Activated T-helper 2 cell treated with anti-CD3 and anti-CD28 coated beads, Interferon-gamma antibody, Interleukin-2, Interleukin-4, amounts not matched to agents 10 μg/mL and 5 μg/mL and 100 μg/mL, durations not matched to agents 14 hours and 24 hours and 36 hours (primary cell): ENCODE measurements at regions of chr19 and their contacts with region 1.

Region 1: DNA sequence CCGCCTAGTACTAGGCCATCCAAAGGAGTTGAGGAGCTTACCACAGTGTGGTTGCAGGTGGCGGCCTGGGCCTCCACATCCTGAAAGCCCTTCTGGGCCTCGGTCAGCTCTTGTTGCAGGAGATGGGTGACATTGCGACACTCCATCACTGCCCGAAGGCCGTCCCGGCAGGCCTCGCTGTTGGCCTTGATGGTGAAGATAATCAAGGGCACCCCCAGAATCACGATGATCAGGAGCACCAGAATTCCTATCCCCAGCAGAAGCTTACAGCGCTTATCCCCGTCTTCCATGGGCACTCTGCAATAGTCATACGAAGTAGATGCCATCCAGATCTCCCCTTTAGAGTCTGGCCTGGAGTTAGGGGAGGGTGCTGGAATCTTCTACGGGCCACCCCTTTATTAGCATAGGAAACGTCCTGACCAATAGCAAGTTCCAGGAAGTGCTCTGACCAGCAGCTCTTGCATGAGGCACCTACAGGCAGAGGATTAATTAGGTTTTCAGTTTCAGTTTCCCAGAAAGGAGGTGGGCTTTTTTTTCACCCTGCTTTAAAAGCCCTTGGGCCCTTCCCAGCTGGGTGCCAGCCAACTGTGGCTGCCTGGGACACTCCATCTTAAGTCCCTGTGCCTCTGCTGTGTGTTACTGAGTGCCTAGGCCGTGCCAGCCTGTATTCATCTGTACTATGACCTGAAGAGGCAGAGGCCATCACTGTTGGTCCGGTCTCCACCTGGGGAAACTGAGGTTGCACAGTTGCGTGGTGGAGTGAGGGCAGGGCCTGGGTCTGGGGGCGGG is at the start of gene BST2:
- DNase-seq: peak; percentile 54
- H3K4me3 Mint-ChIP-seq: peak within 1 kb of the TSS; percentile 92
- H3K27ac Mint-ChIP-seq: peak within 1 kb of the TSS; percentile 87
- H3K4me1 Mint-ChIP-seq: peaks cover 31% of the 10 kb centered on the region
- H3K27me3 Mint-ChIP-seq: no peaks in the 10 kb centered on the region
- total RNA-seq, gene BST2: 129 and 133 TPM in 2 replicates

Region 2: DNA sequence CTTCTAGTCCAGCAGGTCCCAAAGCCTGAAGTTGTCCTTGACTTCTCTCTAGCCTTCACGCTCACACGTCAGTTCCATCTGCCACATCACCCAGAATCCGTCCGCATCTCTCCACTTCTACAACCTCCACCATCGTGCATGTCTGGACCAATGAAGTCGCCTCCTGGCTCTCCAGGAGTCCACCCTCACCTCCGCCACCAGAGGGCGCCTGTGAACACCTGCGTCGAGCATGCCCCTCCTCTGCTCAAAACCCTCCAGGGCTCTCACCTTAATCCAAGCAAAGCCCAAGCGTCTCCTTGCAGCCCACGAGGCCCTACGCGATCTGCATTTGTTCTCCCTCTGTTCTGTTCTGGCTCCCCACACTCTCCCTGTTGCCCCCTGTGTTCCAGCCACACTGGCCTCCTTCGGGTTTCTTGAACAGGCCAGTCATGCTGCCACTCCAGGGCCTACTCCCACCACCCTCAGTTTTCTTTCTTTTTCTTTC is 144.6 kb before region 1 on chr19:
- intact Hi-C with region 1: no loop called
- DNase-seq: peak; percentile 83
- H3K4me3 Mint-ChIP-seq: no peak overlapping the region
- H3K27ac Mint-ChIP-seq: no peak overlapping the region
- H3K4me1 Mint-ChIP-seq: peaks cover 8% of the 10 kb centered on the region
- H3K27me3 Mint-ChIP-seq: peaks cover 3% of the 10 kb centered on the region

Region 3: GRCh38 chr19:17305517-17306284 is 99.7 kb before region 1 on chr19 and contains the start of gene MRPL34:
- intact Hi-C with region 1: loop called (anchors 5 kb)
- DNase-seq: peak; percentile 96
- H3K4me3 Mint-ChIP-seq: peak within 1 kb of the TSS; percentile 87
- H3K27ac Mint-ChIP-seq: peak within 1 kb of the TSS; percentile 85
- H3K4me1 Mint-ChIP-seq: peaks cover 36% of the 10 kb centered on the region
- H3K27me3 Mint-ChIP-seq: no peaks in the 10 kb centered on the region
- total RNA-seq, gene MRPL34: 92.0 and 95.7 TPM in 2 replicates

Region 4: GRCh38 chr19:17336872-17337722 is 68.3 kb before region 1 on chr19 and contains the start of gene GTPBP3:
- intact Hi-C with region 1: loop called (anchors 5 kb)
- DNase-seq: peak; percentile 96
- H3K4me3 Mint-ChIP-seq: peak within 1 kb of the TSS; percentile 84
- H3K27ac Mint-ChIP-seq: peak within 1 kb of the TSS; percentile 89
- H3K4me1 Mint-ChIP-seq: peaks cover 15% of the 10 kb centered on the region
- H3K27me3 Mint-ChIP-seq: no peaks in the 10 kb centered on the region
- total RNA-seq, gene GTPBP3: 62.5 and 66.5 TPM in 2 replicates

Region 5: DNA sequence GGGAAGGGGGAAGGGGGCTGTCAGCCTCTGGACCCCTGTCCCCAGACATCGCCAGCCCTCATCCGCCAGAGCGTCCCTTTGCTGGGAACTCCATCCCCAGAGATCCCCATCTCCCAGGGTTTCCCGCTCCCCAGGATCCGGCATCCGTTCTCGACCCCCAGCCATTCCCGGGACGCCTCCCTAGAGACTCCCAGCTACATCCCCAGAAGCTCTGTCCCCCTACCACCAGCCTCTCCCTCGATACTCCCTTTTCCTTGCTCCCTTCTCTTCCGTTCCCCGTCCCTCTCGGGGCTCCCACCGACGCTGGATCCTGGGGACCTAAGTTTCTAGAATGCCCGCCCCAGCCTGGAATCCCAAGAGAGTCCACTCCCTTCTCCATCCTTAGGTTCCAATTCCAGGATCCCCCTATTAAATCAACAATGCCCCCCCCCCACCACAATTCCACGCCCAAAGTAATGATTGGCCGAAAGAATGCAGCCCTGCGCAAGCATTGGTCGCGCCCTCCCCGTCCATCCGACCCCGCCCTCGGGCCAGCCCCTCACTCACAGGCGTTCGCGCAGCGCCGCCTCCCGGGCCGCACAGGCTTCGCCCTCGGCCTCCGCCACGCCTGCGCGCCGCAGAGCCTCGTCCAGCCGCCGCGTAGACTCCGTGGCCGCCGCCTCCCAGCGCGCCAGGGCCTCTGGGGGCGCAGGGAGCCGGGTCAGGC is 14.6 kb before region 1 on chr19:
- intact Hi-C with region 1: loop called (anchors 2 kb)
- DNase-seq: peak; percentile 87
- H3K4me3 Mint-ChIP-seq: peak overlapping the region; percentile 93
- H3K27ac Mint-ChIP-seq: no peak overlapping the region
- H3K4me1 Mint-ChIP-seq: peaks cover 15% of the 10 kb centered on the region
- H3K27me3 Mint-ChIP-seq: peaks cover 17% of the 10 kb centered on the region

Region 6: GRCh38 chr19:17419621-17420466 is 14.4 kb after region 1 on chr19 and contains the start of gene MVB12A:
- intact Hi-C with region 1: loop called (anchors 1 kb)
- DNase-seq: peak; percentile 94
- H3K4me3 Mint-ChIP-seq: peak within 1 kb of the TSS; percentile 90
- H3K27ac Mint-ChIP-seq: peak within 1 kb of the TSS; percentile 88
- H3K4me1 Mint-ChIP-seq: peaks cover 12% of the 10 kb centered on the region
- H3K27me3 Mint-ChIP-seq: no peaks in the 10 kb centered on the region
- total RNA-seq, gene MVB12A: 41.1 and 43.2 TPM in 2 replicates

Region 7: GRCh38 chr19:17448131-17448967 is 42.9 kb after region 1 on chr19 and contains the start of gene TMEM221:
- intact Hi-C with region 1: no loop called
- DNase-seq: peak; percentile 30
- H3K4me3 Mint-ChIP-seq: no peak within 1 kb of the TSS
- H3K27ac Mint-ChIP-seq: no peak within 1 kb of the TSS
- H3K4me1 Mint-ChIP-seq: peaks cover 13% of the 10 kb centered on the region
- H3K27me3 Mint-ChIP-seq: peaks cover 15% of the 10 kb centered on the region
- total RNA-seq, gene TMEM221: not detected in 2 replicates

Region 8: DNA sequence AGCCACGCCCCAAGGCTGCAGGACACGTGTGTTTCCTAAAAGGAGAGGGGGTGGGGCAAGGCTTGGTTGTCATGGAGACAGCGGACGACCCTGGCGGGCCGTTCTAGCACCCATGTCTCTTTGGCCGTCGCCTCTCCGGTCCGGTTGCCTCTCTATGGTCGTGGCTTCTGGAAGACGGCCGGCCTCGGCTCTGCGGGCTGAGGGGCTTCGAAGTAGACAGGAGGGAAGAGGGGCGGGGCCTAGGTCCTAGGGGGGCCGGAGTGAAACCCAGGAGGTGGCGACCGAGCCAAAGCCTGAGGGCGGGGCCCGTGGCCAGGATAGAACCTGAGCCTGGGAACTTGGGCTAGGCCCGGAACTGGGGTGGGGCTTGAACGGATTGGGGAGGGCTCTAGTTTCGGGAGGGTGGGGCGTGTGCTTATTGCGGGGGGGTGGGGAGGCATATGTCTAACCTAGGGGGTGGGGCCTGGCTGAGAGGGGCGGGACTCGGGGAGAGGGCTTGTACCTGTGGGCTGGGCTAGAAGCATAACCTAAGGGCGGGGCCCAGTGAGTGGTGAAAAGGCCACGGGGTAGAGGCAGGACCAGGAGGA is 64.1 kb after region 1 on chr19:
- intact Hi-C with region 1: loop called (anchors 5 kb)
- DNase-seq: peak; percentile 81
- H3K4me3 Mint-ChIP-seq: peak overlapping the region; percentile 94
- H3K27ac Mint-ChIP-seq: peak overlapping the region; percentile 79
- H3K4me1 Mint-ChIP-seq: peaks cover 20% of the 10 kb centered on the region
- H3K27me3 Mint-ChIP-seq: peaks cover 6% of the 10 kb centered on the region

Region 9: GRCh38 chr19:17703824-17704463 is 298.5 kb after region 1 on chr19:
- intact Hi-C with region 1: no loop called
- DNase-seq: peak; percentile 50
- H3K4me3 Mint-ChIP-seq: no peak overlapping the region
- H3K27ac Mint-ChIP-seq: no peak overlapping the region
- H3K4me1 Mint-ChIP-seq: peaks cover 2% of the 10 kb centered on the region
- H3K27me3 Mint-ChIP-seq: peaks cover 2% of the 10 kb centered on the region